Esophagus muscularis mucosa (tissue), 4 donors: ENCODE measurements at regions of chr6 and their contacts with region 1.

Region 1: GRCh38 chr6:154733012-154733625 is at the start of gene SCAF8:
- DNase-seq: peak; percentile 93
- H3K4me3 ChIP-seq: peak within 1 kb of the TSS; percentile 84 to 97 (median 86)
- H3K27ac ChIP-seq: peak within 1 kb of the TSS; percentile 95 to 99 (median 99)
- H3K4me1 ChIP-seq: peaks cover 46 to 51% (median 50%) of the 10 kb centered on the region in 4 donors
- H3K27me3 ChIP-seq: no peaks in the 10 kb centered on the region
- CTCF ChIP-seq: peak; percentile 75 to 83 (median 77)
- EP300 ChIP-seq: no peak
- POLR2A ChIP-seq: no peak
- total RNA-seq, gene SCAF8: 35.7 to 42.0 (median 38.8) TPM

Region 2: GRCh38 chr6:154675602-154676088 is 57.5 kb before region 1 on chr6:
- intact Hi-C with region 1: loop called (anchors 5 kb)
- DNase-seq: peak; percentile 96
- H3K4me3 ChIP-seq: no peak overlapping the region
- H3K27ac ChIP-seq: no peak overlapping the region
- H3K4me1 ChIP-seq: no peaks in the 10 kb centered on the region
- H3K27me3 ChIP-seq: no peaks in the 10 kb centered on the region
- CTCF ChIP-seq: peak; percentile 98 to 99 (median 98)
- EP300 ChIP-seq: no peak
- POLR2A ChIP-seq: no peak

Region 3: GRCh38 chr6:154805288-154805911 is 72.3 kb after region 1 on chr6:
- intact Hi-C with region 1: loop called (anchors 2 kb)
- DNase-seq: no peak
- H3K4me3 ChIP-seq: no peak overlapping the region
- H3K27ac ChIP-seq: no peak overlapping the region
- H3K4me1 ChIP-seq: peaks cover 0 to 8% (median 3%) of the 10 kb centered on the region in 4 donors
- H3K27me3 ChIP-seq: no peaks in the 10 kb centered on the region
- CTCF ChIP-seq: peak; percentile 57
- EP300 ChIP-seq: no peak
- POLR2A ChIP-seq: no peak